ENCODE measurements at regions of chr21 and their contacts with region 1.

Region 1: DNA sequence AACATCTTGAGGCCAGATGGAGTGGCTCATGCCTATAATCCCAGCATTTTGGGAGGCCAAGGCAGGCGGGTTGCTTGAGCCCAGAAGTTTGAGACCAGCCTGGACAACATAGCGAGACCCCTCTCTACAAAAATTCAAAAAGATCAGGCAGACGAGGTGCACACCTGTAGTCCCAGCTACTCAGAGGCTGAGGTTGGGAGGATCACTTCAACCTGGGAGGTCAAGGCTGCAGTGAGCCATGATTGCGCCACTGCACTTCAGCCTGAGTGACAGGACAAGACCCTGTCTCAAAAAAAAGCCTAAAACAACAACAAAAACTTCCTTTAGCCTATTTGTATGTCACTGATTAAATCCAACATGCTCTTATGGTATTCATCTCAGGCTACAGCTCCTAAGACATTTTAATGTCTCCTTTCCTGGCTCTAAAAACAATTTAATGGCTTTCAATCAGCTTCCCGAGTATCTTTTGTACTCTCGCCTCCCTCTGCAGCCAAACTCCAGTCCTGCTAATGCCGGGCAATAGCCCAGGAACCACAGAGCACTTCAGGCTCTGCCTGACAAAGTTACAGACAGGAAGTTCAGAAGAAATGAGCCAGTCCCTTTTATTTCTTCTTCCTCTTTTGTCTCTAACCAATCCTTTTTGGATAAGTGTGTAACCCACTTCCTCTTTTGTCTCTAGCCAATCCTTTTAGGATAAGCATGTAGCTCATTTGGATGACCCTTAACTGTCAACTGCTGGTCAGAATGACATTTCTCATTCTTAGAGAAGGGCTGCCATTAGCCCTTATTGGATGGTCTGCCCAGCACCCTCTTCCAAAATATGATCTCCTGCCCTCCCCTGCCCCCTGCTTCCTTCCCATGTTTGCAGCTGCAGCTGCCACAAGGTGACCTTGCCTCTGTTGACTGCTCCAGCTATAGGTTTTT is 6.6 kb upstream of the DOP1B start:
- DNase-seq: no peak
- H3K4me3 ChIP-seq: no peak overlapping the region
- H3K27ac ChIP-seq: peak overlapping the region; percentile 32 to 67 (median 56)
- H3K4me1 ChIP-seq: peaks cover 10 to 14% (median 13%) of the 10 kb centered on the region in 4 donors
- H3K27me3 ChIP-seq: no peaks in the 10 kb centered on the region
- CTCF ChIP-seq: no peak
- EP300 ChIP-seq: no peak
- POLR2A ChIP-seq: no peak

Region 2: GRCh38 chr21:36188081-36188681 is 38.1 kb after region 1 on chr21:
- intact Hi-C with region 1: no loop called
- DNase-seq: no peak
- H3K4me3 ChIP-seq: no peak overlapping the region
- H3K27ac ChIP-seq: no peak overlapping the region
- H3K4me1 ChIP-seq: peaks cover 6 to 13% (median 11%) of the 10 kb centered on the region in 4 donors
- H3K27me3 ChIP-seq: no peaks in the 10 kb centered on the region
- CTCF ChIP-seq: no peak
- EP300 ChIP-seq: no peak
- POLR2A ChIP-seq: no peak

Region 3: GRCh38 chr21:36203617-36203917 is 53.5 kb after region 1 on chr21:
- intact Hi-C with region 1: no loop called
- DNase-seq: no peak
- H3K4me3 ChIP-seq: no peak overlapping the region
- H3K27ac ChIP-seq: no peak overlapping the region
- H3K4me1 ChIP-seq: peaks cover 0 to 9% (median 0%) of the 10 kb centered on the region in 4 donors
- H3K27me3 ChIP-seq: no peaks in the 10 kb centered on the region
- CTCF ChIP-seq: no peak
- EP300 ChIP-seq: no peak
- POLR2A ChIP-seq: no peak

Region 4: GRCh38 chr21:36330904-36331303 is 180.9 kb after region 1 on chr21:
- intact Hi-C with region 1: loop called (anchors 5 kb)
- DNase-seq: no peak
- H3K4me3 ChIP-seq: no peak overlapping the region
- H3K27ac ChIP-seq: peak overlapping the region in 1 of 4 donors; percentile 12
- H3K4me1 ChIP-seq: peaks cover 51 to 66% (median 64%) of the 10 kb centered on the region in 4 donors
- H3K27me3 ChIP-seq: no peaks in the 10 kb centered on the region
- CTCF ChIP-seq: peak; percentile 68 to 73 (median 69)
- EP300 ChIP-seq: no peak
- POLR2A ChIP-seq: no peak

Measured in esophagus muscularis mucosa (tissue), 4 donors.